PC-3 (cell line): ENCODE measurements at regions of chr3 and their contacts with region 1.

Region 1: GRCh38 chr3:151544164-151544548 is 83.3 kb upstream of the IGSF10 start:
- DNase-seq: peak; percentile 23
- ATAC-seq: no peak
- H3K4me3 ChIP-seq: no peak overlapping the region
- H3K27ac ChIP-seq: peak overlapping the region; percentile 46; the same call in 1 of the 2 replicates
- H3K4me1 ChIP-seq: peaks cover 33% of the 10 kb centered on the region
- H3K27me3 ChIP-seq: no peaks in the 10 kb centered on the region
- CTCF ChIP-seq: no peak

Region 2: GRCh38 chr3:151520105-151520504 is 24.1 kb before region 1 on chr3:
- CTCF ChIA-PET with region 1: no interaction called
- POLR2A ChIA-PET with region 1: no interaction called
- intact Hi-C with region 1: loop called (anchors 1 kb)
- DNase-seq: no peak
- ATAC-seq: peak; percentile 77
- H3K4me3 ChIP-seq: no peak overlapping the region
- H3K27ac ChIP-seq: no peak overlapping the region
- H3K4me1 ChIP-seq: no peaks in the 10 kb centered on the region
- H3K27me3 ChIP-seq: no peaks in the 10 kb centered on the region
- CTCF ChIP-seq: no peak